ENCODE measurements at regions of chr1 and their contacts with region 1.

Region 1: GRCh38 chr1:156608036-156608674 is 6.9 kb upstream of the GPATCH4 start:
- DNase-seq: peak; percentile 51
- H3K4me3 Mint-ChIP-seq: no peak overlapping the region
- H3K27ac Mint-ChIP-seq: no peak overlapping the region
- H3K4me1 Mint-ChIP-seq: peaks cover 8% of the 10 kb centered on the region
- H3K27me3 Mint-ChIP-seq: peaks cover 15% of the 10 kb centered on the region

Region 2: GRCh38 chr1:156385534-156386031 is 222.6 kb before region 1 on chr1:
- intact Hi-C with region 1: loop called (anchors 5 kb)
- DNase-seq: peak; percentile 61
- H3K4me3 Mint-ChIP-seq: no peak overlapping the region
- H3K27ac Mint-ChIP-seq: no peak overlapping the region
- H3K4me1 Mint-ChIP-seq: peaks cover 4% of the 10 kb centered on the region
- H3K27me3 Mint-ChIP-seq: peaks cover 34% of the 10 kb centered on the region

Region 3: GRCh38 chr1:156456622-156457465 is 151.3 kb before region 1 on chr1:
- intact Hi-C with region 1: loop called (anchors 1 kb)
- DNase-seq: peak; percentile 92
- H3K4me3 Mint-ChIP-seq: peak overlapping the region; percentile 84
- H3K27ac Mint-ChIP-seq: peak overlapping the region; percentile 97
- H3K4me1 Mint-ChIP-seq: peaks cover 21% of the 10 kb centered on the region
- H3K27me3 Mint-ChIP-seq: peaks cover 13% of the 10 kb centered on the region

Region 4: DNA sequence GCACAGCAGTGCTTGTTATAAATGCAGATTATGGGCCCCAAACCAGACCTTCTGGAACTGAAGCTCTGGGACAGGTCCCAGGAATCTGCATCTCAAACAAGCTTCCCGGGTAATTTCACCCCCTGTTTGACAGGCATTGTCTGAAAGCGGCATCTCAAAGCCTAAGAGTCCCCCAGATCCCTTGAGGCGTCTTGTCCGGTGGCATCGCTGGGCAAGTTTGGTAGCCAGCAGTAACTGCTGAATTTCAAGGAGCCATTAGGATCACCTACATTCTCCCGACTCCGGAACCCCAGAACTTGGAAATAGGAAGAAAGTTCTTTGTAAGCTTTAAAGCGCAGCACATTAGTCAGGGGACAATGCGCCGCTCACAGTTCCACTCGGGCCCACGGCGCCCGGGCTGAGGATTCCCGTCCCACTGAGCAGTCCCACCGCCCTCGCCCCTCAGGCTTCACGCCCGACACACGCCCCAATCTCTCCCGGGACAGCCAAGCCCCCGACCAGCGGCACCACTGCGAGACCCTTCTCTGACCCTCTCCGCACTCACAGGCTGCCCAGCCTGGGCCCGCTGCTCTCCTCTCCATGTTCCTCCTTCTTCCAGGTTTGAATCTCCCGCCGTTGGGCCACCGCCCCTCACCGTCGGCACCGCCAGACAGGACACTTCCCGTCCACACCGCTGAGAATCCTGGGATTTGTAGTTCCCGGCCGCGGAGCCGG is 36.0 kb before region 1 on chr1 and contains the start of gene IQGAP3:
- intact Hi-C with region 1: loop called (anchors 5 kb)
- DNase-seq: peak; percentile 69
- H3K4me3 Mint-ChIP-seq: peak within 1 kb of the TSS; percentile 95
- H3K27ac Mint-ChIP-seq: peak within 1 kb of the TSS; percentile 87
- H3K4me1 Mint-ChIP-seq: peaks cover 24% of the 10 kb centered on the region
- H3K27me3 Mint-ChIP-seq: peaks cover 19% of the 10 kb centered on the region
- total RNA-seq, gene IQGAP3: 16.1 and 16.8 TPM in 2 replicates

Region 5: DNA sequence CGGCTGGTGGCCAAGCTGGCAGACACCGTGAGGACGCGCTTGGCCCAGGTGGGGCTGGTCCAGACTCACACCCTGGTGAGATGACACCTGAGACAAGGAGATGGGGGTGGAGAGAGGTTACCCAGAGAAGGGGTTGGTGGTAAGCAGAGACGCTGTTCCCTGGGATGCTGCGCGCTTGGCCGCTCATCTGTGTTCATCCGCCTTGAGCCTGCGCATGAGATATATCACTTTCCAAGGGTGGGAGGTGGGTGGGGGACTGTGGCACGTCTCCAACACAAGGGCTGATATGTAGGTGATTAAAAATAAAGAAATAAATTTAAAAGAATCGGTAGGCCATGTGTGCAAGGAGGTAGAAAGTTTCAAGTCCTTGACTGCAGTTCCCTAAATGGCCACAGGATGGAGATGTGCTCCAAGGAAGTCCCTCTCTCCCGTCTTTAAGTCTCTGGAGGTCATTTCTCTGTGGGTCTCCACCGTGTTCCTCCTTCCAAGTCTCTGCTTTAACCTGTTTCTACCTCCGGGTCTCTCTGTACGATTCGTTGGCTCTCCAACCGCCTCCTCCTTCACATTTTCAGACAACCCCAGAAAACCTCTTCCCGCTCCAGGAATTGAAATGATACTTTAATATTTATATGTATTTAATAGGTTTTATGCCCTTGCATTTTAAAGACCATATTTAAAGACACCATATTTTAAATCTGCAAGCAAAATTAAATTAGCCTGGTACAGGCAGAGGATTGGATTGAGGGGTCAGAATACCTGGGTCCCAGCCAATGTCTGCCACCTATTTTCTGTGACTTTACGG is 24.1 kb before region 1 on chr1:
- intact Hi-C with region 1: loop called (anchors 1 kb)
- DNase-seq: peak; percentile 50
- H3K4me3 Mint-ChIP-seq: no peak overlapping the region
- H3K27ac Mint-ChIP-seq: no peak overlapping the region
- H3K4me1 Mint-ChIP-seq: peaks cover 8% of the 10 kb centered on the region
- H3K27me3 Mint-ChIP-seq: no peaks in the 10 kb centered on the region

Region 6: GRCh38 chr1:156664767-156665411 is 56.7 kb after region 1 on chr1:
- intact Hi-C with region 1: no loop called
- DNase-seq: no peak
- H3K4me3 Mint-ChIP-seq: no peak overlapping the region
- H3K27ac Mint-ChIP-seq: no peak overlapping the region
- H3K4me1 Mint-ChIP-seq: peaks cover 22% of the 10 kb centered on the region
- H3K27me3 Mint-ChIP-seq: peaks cover 11% of the 10 kb centered on the region

Measured in activated T-helper 2 cell treated with anti-CD3 and anti-CD28 coated beads, Interferon-gamma antibody, Interleukin-2, Interleukin-4, amounts not matched to agents 10 μg/mL and 5 μg/mL and 100 μg/mL, durations not matched to agents 14 hours and 24 hours and 36 hours (primary cell).